ENCODE measurements at regions of chr19 and their contacts with region 1.

Region 1: DNA sequence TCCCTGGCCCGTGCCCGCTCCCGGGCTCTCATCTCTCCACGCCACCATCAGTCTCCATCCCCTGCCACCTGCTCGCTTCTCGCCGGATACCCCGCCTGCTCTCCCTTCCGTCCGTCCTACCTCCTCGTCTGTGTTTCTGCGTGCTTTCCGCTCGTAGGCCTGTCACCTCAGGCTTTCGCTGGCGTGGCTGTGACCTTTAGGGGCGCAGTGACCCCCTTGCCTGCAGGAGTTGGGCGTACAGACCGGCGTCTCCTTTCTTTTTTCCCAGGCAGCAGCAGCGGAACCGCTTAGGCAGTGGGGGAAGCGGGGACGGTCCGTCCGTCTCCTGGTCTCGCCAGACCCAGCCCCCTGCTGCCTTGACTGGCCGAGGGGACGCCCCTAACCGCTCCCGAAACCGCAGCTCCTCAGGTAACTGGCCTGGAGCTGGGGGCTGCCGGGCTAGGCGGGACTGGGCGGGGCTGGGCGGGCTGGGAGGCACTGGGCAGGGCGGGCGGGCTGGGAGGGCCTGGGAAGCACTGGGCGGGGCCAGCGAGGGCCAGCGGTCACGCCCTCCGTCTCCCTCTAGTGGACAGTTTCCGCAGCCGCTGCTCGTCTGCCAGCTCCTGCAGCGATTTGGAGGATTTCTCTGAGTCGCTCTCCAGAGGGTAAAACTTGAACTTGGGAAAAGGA is 6.3 kb downstream of the PGLYRP1 start:
- DNase-seq: peak; percentile 80 to 90
- ATAC-seq: peak; percentile 85 to 92 (median 88)
- H3K4me3 ChIP-seq: peak overlapping the region; percentile 76
- H3K27ac ChIP-seq: no peak overlapping the region
- H3K4me1 ChIP-seq: no peaks in the 10 kb centered on the region
- H3K27me3 ChIP-seq: peaks cover 0 to 39% (median 23%) of the 10 kb centered on the region in 3 donors
- CTCF ChIP-seq: peak; percentile 85

Region 2: GRCh38 chr19:45863843-45864628 is 152.5 kb before region 1 on chr19 and contains the start of gene FOXA3:
- intact Hi-C with region 1: loop called in 1 of 2 experiments (anchors 5 kb)
- DNase-seq: peak; percentile 62 to 70
- ATAC-seq: peak; percentile 46 to 70 (median 68)
- H3K4me3 ChIP-seq: peak within 1 kb of the TSS; percentile 92
- H3K27ac ChIP-seq: no peak within 1 kb of the TSS
- H3K4me1 ChIP-seq: peaks cover 5% of the 10 kb centered on the region
- H3K27me3 ChIP-seq: peaks cover 0 to 8% (median 0%) of the 10 kb centered on the region in 3 donors
- CTCF ChIP-seq: peak; percentile 51
- total RNA-seq, gene FOXA3: not detected

Measured in psoas muscle (tissue), 8 donors.